Activated T-helper 1 cell treated with anti-CD3 and anti-CD28 coated beads, Interleukin-12 subunit alpha, Interleukin-12 subunit beta, Interleukin-2, Interleukin-4 antibody, amounts not matched to agents 30 ng/mL and 10 ng/mL and 1 ng/mL, durations not matched to agents 14 hours and 24 hours and 36 hours (primary cell): ENCODE measurements at regions of chr12 and their contacts with region 1.

Region 1: GRCh38 chr12:56315622-56316473 is at the start of gene CNPY2:
- DNase-seq: peak; percentile 83
- H3K4me3 Mint-ChIP-seq: peak within 1 kb of the TSS; percentile 98
- H3K27ac Mint-ChIP-seq: peak within 1 kb of the TSS; percentile 96
- H3K4me1 Mint-ChIP-seq: peaks cover 12% of the 10 kb centered on the region
- H3K27me3 Mint-ChIP-seq: no peaks in the 10 kb centered on the region
- total RNA-seq, gene CNPY2: 170 and 172 TPM in 2 replicates

Region 2: GRCh38 chr12:55925870-55926737 is 389.7 kb before region 1 on chr12:
- intact Hi-C with region 1: no loop called
- DNase-seq: no peak
- H3K4me3 Mint-ChIP-seq: peak overlapping the region; percentile 90
- H3K27ac Mint-ChIP-seq: peak overlapping the region; percentile 96
- H3K4me1 Mint-ChIP-seq: peaks cover 59% of the 10 kb centered on the region
- H3K27me3 Mint-ChIP-seq: no peaks in the 10 kb centered on the region

Region 3: DNA sequence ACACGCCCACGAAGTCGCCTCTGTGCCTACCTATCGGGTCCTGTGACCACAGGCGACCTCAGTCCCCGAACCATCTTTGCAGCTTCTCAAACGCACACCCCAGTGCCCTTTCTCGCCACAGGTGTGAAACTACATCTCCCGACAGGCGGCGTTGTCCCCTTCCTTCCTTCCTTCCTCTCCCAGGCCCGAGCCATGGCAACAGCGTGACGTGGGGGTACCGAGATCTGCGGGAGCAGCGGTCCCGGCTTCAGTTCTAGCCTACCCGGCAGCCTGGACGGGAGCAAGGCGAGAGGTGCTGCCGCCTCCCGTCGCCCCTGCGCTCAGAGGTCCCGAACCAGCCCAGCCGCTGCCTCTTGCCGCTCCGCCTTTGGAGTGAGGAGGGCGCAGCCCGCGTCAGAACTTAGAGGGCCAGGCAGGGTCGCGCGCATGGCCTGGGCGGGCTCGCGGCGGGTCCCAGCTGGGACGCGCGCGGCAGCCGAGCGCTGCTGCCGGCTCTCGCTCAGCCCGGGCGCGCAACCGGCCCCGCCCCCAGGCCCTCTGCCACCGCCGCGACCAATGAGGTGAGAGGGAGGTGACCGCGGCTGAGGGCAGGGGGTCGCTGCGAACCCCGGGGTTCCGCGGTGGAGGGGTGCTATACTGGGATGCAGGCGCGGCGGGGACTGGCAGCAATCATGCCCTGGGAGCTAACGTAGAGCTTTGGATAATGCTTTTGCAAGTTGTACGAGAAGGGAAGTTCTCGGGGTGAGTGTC is 49.0 kb before region 1 on chr12 and contains the start of gene COQ10A:
- intact Hi-C with region 1: loop called (anchors 1 kb)
- DNase-seq: peak; percentile 84
- H3K4me3 Mint-ChIP-seq: peak within 1 kb of the TSS; percentile 96
- H3K27ac Mint-ChIP-seq: peak within 1 kb of the TSS; percentile 87
- H3K4me1 Mint-ChIP-seq: peaks cover 15% of the 10 kb centered on the region
- H3K27me3 Mint-ChIP-seq: no peaks in the 10 kb centered on the region
- total RNA-seq, gene COQ10A: 17.8 and 18.0 TPM in 2 replicates